ENCODE measurements at regions of chr5 and their contacts with region 1.

Region 1: DNA sequence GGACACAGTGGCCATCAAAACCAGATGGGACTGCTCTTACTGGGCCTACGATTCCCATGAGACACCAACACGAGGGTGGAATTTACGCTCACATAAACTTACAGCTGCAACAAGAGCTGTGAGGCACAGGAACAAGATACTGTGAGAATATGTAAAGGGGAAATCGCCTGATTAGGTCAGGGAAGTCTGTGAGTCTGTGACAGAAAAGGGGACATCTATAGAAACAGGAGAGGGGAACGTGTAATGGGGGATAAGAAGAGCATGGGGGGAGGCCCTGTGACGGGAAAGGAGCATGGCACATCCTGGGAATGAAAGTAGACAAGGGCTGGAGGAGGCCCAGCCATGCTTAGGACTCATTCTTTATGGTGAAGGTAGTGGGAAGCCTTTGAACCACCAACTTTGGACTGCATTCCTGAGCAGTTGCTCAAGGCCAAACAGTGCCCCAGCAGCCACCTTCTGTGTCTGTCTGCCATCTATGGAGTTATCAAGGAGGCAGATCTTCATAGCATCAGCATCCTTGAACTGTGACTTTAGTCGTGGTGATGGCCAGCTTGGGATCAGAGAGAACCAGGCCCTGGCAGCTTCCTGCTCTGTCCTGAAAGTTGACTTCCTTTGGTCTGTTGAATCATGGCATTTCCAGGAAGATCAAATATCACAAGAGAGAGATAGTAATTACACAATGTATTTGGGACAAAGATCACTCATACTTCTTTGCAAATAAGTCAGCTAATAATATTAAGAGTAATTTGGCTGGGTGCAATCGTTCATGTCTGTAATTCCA is 87.9 kb upstream of the FAM169A start:
- DNase-seq: no peak

Region 2: DNA sequence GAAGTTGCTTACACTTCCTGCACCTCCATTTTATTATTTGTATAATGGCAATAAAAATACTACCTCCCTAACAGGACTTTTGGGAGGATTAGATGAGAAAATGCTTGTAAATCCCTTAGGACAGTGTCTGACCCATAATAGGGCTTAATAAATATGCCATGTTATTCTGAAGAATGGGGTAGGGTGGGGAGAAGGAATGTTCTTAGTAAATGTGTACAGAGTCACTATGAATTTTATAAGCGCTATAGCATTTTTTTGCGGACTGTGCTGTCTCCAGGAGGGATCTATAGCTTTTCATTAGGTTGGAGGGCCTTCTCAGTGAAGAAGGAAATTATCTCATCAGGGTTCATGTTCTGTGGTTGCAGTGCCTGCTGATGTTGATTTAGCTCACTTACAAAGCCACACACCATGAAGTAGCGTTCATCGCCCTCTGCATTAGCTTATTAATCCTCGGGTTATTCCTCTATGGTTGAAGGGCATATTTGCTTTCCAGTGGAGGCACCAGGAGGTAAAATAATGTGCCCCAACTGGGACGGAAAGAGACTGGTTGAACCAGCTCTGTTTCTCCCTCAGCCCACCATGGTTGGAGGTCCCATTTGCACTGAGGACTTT is 831.0 kb before region 1 on chr5:
- intact Hi-C with region 1: loop called in 1 of 2 experiments (anchors 5 kb)
- DNase-seq: no peak

Region 3: GRCh38 chr5:75433814-75434506 is 479.8 kb after region 1 on chr5:
- intact Hi-C with region 1: no loop called
- DNase-seq: no peak

Region 4: DNA sequence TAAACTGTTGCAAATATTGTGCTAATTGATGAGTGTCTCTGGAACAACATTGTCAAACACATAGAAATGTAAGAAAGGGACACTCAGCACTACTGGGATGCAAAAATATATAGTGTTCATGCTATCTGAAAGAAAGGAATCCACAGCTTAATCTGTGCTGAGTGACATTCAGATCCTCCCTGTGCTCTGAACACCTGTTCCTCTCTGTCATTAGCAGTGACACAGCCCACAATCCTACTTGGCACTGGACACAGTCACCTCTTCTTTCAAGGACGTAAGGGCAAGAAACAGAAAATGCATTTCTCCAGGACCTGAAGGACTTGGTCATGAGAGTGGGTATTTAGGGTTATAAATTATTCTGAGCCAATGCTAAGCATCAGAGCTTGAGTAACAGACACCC is 1007.7 kb after region 1 on chr5:
- intact Hi-C with region 1: no loop called
- DNase-seq: no peak

Region 5: GRCh38 chr5:76163111-76163623 is 1209.0 kb after region 1 on chr5:
- intact Hi-C with region 1: loop called in 1 of 2 experiments (anchors 5 kb)
- DNase-seq: no peak